ENCODE measurements at regions of chr17 and their contacts with region 1.

Region 1: DNA sequence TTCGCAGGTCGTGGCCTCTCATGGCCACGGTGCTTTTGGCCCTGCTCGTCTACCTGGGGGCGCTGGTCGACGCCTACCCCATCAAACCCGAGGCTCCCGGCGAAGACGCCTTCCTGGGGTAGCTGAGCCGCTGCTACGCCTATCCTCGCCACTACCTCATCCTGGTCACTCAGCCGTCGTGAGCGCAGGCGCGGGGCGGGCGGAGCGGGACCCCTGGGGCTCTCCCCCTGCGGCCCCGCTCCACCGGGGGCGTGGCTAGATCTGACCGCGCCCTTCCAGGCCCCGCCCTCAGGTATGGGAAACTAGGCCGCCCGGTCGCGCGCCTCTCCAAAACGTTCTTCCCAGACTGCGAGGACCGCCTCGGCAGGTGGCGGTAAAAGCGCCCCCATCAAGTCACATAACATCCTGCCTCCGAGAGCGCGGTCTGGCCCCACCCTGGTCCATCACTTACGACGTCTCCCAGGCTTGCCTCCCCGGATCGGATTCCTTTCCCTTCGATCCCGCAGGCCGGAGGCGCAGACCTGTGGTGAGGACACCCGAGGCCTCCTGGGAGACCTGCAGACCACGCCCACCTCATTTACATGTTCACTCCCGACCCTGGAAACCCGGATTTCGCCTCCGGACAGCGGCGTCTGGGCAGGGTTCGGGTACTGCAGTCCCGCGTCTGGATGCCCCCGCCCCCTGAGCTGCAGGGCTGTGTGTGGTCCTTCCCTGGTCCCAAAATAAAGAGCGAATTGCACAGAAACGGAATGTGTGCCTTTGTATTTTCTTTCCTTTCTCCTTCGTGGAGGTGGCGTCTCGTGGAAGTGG is 91.5 kb upstream of the TMEM97 start:
- DNase-seq: peak; percentile 50
- ATAC-seq: peak; percentile 71
- H3K4me3 Mint-ChIP-seq: peak overlapping the region; percentile 72
- H3K27ac Mint-ChIP-seq: no peak overlapping the region
- H3K4me1 Mint-ChIP-seq: peaks cover 9% of the 10 kb centered on the region
- H3K27me3 Mint-ChIP-seq: peaks cover 40% of the 10 kb centered on the region
- CTCF ChIP-seq: no peak

Region 2: GRCh38 chr17:28240991-28241340 is 13.4 kb after region 1 on chr17:
- CTCF ChIA-PET with region 1: interaction called, 12 read pairs
- POLR2A ChIA-PET with region 1: no interaction called
- intact Hi-C with region 1: no loop called
- DNase-seq: no peak
- ATAC-seq: no peak
- H3K4me3 Mint-ChIP-seq: no peak overlapping the region
- H3K27ac Mint-ChIP-seq: no peak overlapping the region
- H3K4me1 Mint-ChIP-seq: no peaks in the 10 kb centered on the region
- H3K27me3 Mint-ChIP-seq: peaks cover 1% of the 10 kb centered on the region
- CTCF ChIP-seq: no peak

Region 3: DNA sequence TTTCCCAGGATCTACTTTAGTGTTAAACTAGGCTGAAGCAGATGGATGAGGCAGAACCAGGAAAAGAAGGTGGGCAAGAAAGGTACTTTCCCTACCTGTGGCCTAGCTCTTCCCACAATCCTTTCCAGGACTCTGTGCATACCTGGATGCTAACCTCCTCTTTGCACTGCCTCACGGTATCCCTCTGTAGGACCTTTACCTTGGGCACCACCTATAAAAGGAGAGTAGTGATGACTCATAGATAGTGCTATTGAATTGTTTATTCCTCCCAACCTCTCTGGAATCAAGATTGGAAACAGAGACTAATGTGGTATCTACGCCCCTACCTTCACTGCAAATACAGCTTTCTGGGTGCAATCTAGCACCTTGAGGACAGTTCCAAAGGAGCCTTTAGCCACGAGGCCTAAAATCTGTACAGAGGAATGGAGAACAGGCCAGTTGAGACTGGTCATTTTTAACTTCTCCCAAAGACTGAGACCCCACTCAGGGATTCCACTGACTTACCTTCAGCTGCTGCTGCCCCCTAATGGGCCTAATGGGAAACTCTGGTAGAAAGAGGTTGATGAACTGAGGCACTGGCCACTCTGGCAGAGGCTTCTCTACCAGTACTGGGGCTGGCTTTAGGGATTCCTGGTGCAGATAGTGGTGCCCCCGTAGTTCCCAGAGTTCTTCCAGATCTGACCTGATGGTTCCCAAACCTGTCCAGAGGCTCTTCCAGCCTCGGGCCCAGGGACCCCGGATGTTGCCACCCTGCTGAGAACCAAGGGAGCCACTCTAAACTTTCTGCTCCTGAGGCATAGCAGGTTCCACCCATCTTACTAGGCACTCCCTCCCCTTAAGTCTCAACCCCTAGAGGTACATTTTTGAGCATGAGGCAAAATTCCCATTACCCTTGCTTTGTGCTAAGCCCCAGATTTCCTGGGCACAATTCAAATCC is 385.7 kb after region 1 on chr17:
- CTCF ChIA-PET with region 1: no interaction called
- POLR2A ChIA-PET with region 1: no interaction called
- intact Hi-C with region 1: no loop called
- DNase-seq: peak; percentile 55
- ATAC-seq: peak; percentile 64
- H3K4me3 Mint-ChIP-seq: no peak overlapping the region
- H3K27ac Mint-ChIP-seq: no peak overlapping the region
- H3K4me1 Mint-ChIP-seq: no peaks in the 10 kb centered on the region
- H3K27me3 Mint-ChIP-seq: no peaks in the 10 kb centered on the region
- CTCF ChIP-seq: peak; percentile 80